ENCODE measurements at regions of chr2 and their contacts with region 1.

Region 1: GRCh38 chr2:25063876-25064660 is 22.2 kb downstream of the EFR3B start:
- DNase-seq: no peak
- ATAC-seq: peak; percentile 97 to 98
- H3K4me3 ChIP-seq: peak overlapping the region in 3 of 4 donors; percentile 23 to 42 (median 30)
- H3K27ac ChIP-seq: peak overlapping the region; percentile 75 to 82 (median 76)
- H3K4me1 ChIP-seq: peaks cover 20 to 28% of the 10 kb centered on the region in 2 donors
- H3K27me3 ChIP-seq: no peaks in the 10 kb centered on the region
- CTCF ChIP-seq: no peak
- POLR2A ChIP-seq: no peak

Region 2: GRCh38 chr2:24886691-24887304 is 177.3 kb before region 1 on chr2:
- in situ Hi-C with region 1: no loop called
- intact Hi-C with region 1: no loop called
- DNase-seq: no peak
- ATAC-seq: no peak
- H3K4me3 ChIP-seq: no peak overlapping the region
- H3K27ac ChIP-seq: peak overlapping the region; percentile 4 to 48 (median 30)
- H3K4me1 ChIP-seq: peaks cover 3% of the 10 kb centered on the region in 2 donors
- H3K27me3 ChIP-seq: no peaks in the 10 kb centered on the region
- CTCF ChIP-seq: no peak
- POLR2A ChIP-seq: no peak

Region 3: DNA sequence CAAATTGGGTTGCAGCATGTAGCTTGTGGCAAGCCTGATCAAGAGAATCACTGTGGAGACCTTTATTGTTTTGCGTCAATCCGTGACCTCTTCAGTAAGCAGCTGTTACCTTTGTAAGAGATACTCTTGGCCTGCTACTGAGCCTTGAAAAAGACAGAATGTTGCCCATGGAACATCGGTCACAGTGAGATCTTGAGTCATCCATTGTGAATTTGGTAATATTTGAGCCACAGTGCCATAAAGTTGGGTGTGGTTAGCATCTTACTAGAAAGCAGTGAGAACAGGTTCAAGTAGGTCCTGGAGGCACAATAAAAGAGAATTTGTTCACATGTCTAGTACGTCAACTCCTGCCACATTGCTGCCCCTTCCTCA is 34.9 kb before region 1 on chr2:
- in situ Hi-C with region 1: no loop called
- intact Hi-C with region 1: loop called (anchors 5 kb)
- DNase-seq: peak; percentile 20 to 48
- ATAC-seq: peak; percentile 90 to 91
- H3K4me3 ChIP-seq: no peak overlapping the region
- H3K27ac ChIP-seq: peak overlapping the region; percentile 40 to 72 (median 59)
- H3K4me1 ChIP-seq: peaks cover 29% of the 10 kb centered on the region in 2 donors
- H3K27me3 ChIP-seq: no peaks in the 10 kb centered on the region
- CTCF ChIP-seq: no peak
- POLR2A ChIP-seq: no peak

Region 4: GRCh38 chr2:25041928-25042320 is 22.1 kb before region 1 on chr2 and contains the start of gene EFR3B:
- in situ Hi-C with region 1: no loop called
- intact Hi-C with region 1: loop called (anchors 1 kb)
- DNase-seq: peak; percentile 93 to 94
- ATAC-seq: peak; percentile 86 to 88
- H3K4me3 ChIP-seq: peak within 1 kb of the TSS; percentile 60 to 98 (median 66)
- H3K27ac ChIP-seq: peak within 1 kb of the TSS; percentile 69 to 87 (median 76)
- H3K4me1 ChIP-seq: peaks cover 15 to 22% of the 10 kb centered on the region in 2 donors
- H3K27me3 ChIP-seq: no peaks in the 10 kb centered on the region
- CTCF ChIP-seq: peak in 2 of 5 experiments; percentile 24 to 25
- POLR2A ChIP-seq: peak; percentile 54 to 77
- total RNA-seq, gene EFR3B: 0.29 to 1.4 (median 0.67) TPM

Measured in gastrocnemius medialis (tissue), 4 donors.